IMR-90 (cell line): ENCODE measurements at regions of chr5 and their contacts with region 1.

Region 1: DNA sequence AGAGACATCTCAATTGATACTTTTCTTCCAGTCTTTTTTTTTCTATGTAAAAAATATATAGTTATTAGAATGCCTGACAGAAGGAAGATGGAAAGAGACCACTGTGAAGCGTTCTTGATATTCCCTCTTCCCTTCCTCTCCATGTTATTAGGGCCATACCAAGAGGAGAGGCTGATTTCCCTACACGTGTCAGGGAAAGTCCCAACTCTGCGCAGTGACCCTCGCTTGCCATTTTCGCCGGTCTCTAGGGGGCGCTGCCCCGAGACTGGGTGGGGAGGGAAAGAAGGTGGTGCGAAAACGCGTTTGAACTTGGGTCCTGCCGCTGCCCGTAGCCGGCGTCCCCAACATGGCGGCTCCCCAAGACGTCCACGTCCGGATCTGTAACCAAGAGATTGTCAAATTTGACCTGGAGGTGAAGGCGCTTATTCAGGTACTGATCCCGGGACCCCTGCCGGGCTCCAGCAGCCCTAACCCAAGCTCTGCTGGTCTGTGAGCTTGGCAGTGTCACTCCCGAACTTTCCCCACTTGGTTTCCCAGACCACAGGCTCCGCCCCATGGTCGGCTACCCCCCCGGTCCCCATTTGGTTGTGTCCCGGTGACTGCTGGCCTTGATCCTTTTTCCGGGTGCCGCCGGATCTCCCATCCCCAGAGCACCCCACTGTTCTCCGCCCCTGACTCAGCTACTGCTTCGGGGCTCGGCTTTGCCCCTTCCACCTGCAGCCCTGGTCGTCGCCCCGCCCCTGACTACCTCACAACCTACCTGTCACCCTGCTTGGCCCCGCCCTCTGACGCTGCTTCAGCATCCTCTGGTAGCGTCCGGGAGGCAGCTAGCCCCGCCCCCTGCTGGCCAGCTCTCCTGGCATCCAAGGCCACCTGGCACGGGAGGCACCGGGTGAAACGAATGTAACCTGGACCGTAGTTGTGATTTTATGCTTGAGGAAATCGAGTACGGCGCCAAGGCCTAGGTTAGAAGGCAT is at the start of gene BNIP1:
- DNase-seq: peak; percentile 94
- ATAC-seq: peak; percentile 96
- H3K4me3 ChIP-seq: peak within 1 kb of the TSS; percentile 53
- H3K27ac ChIP-seq: peak within 1 kb of the TSS; percentile 67
- H3K4me1 ChIP-seq: no peaks in the 10 kb centered on the region
- H3K27me3 ChIP-seq: no peaks in the 10 kb centered on the region
- CTCF ChIP-seq: peak; percentile 99
- POLR2A ChIP-seq: peak; percentile 69
- RAD21 ChIP-seq: peak; percentile 66
- total RNA-seq, gene BNIP1: 29.2 and 35.3 TPM in 2 replicates

Region 2: DNA sequence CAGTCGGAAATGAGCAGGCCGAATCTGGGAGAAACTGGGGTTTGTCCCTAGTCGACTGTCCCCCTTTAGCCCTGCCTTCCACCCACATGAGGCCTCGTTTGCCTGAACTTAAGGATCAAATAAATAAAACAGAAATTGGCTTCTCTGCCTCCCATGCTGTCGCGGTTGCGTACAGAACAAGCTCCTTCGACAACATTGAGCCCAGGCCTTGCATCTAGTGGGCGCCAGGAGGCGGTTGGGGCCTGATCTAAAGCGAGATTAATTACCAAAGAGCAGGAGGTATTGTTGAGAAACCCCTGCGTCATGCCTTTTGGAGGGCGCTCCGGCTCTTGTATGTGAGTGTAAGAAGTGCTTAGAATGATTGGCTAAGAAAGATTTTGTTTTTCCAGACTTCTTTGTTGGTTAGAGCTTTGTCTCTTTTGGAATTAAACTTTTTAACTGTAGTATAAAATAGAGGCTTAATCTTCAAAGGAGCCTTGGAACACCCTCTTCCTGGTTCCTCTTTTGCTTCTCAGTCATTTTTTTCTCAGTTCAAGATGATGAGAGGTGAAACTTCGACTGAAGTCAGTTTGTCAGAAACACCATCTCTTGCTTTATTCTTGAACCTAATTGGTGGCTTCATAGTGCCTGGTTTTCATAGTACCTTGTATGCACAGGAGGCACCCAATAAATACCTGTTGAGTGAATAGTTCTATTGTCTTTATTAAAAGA is 160.1 kb before region 1 on chr5:
- CTCF ChIA-PET with region 1: no interaction called
- POLR2A ChIA-PET with region 1: no interaction called
- dilution Hi-C with region 1: no loop called
- in situ Hi-C with region 1: loop called (anchors 5 kb)
- intact Hi-C with region 1: loop called (anchors 2 kb)
- DNase-seq: peak; percentile 92
- ATAC-seq: peak; percentile 65
- H3K4me3 ChIP-seq: peak overlapping the region; percentile 86
- H3K27ac ChIP-seq: peak overlapping the region; percentile 92
- H3K4me1 ChIP-seq: peaks cover 2% of the 10 kb centered on the region; the same call in 1 of the 2 replicates
- H3K27me3 ChIP-seq: no peaks in the 10 kb centered on the region
- CTCF ChIP-seq: peak; percentile 66
- POLR2A ChIP-seq: peak; percentile 58; the same call in 1 of the 2 replicates
- RAD21 ChIP-seq: peak; percentile 79

Region 3: GRCh38 chr5:173069671-173070070 is 74.8 kb before region 1 on chr5:
- CTCF ChIA-PET with region 1: no interaction called
- POLR2A ChIA-PET with region 1: no interaction called
- dilution Hi-C with region 1: no loop called
- in situ Hi-C with region 1: no loop called
- intact Hi-C with region 1: loop called (anchors 5 kb)
- DNase-seq: no peak
- ATAC-seq: no peak
- H3K4me3 ChIP-seq: no peak overlapping the region
- H3K27ac ChIP-seq: no peak overlapping the region
- H3K4me1 ChIP-seq: no peaks in the 10 kb centered on the region
- H3K27me3 ChIP-seq: no peaks in the 10 kb centered on the region
- CTCF ChIP-seq: no peak
- POLR2A ChIP-seq: no peak
- RAD21 ChIP-seq: no peak

Region 4: DNA sequence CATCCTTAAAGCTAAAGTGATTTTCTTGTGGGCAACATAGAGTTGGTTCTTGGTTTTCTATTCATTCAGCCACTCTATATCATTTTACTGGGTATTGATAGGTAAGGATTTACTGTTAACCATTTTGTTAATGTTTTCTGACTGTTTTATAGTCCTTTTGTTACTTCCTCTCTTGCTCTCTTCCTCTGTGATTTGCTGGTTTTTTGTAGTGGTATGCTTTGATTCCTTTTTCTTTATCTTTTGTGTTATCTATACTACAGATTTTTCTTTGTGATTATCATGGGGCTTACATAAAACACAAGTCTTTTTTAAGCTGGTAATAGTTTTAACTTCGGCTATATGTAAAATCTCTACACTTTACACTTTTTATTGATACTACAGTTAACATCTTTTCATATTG is 45.0 kb before region 1 on chr5:
- CTCF ChIA-PET with region 1: interaction called, 5 read pairs
- POLR2A ChIA-PET with region 1: no interaction called
- dilution Hi-C with region 1: no loop called
- in situ Hi-C with region 1: no loop called
- intact Hi-C with region 1: loop called (anchors 5 kb)
- DNase-seq: no peak
- ATAC-seq: no peak
- H3K4me3 ChIP-seq: no peak overlapping the region
- H3K27ac ChIP-seq: no peak overlapping the region
- H3K4me1 ChIP-seq: peaks cover 3% of the 10 kb centered on the region; the same call in 1 of the 2 replicates
- H3K27me3 ChIP-seq: no peaks in the 10 kb centered on the region
- CTCF ChIP-seq: no peak
- POLR2A ChIP-seq: no peak
- RAD21 ChIP-seq: no peak